A549 (cell line): ENCODE measurements at regions of chr1 and their contacts with region 1.

Region 1: DNA sequence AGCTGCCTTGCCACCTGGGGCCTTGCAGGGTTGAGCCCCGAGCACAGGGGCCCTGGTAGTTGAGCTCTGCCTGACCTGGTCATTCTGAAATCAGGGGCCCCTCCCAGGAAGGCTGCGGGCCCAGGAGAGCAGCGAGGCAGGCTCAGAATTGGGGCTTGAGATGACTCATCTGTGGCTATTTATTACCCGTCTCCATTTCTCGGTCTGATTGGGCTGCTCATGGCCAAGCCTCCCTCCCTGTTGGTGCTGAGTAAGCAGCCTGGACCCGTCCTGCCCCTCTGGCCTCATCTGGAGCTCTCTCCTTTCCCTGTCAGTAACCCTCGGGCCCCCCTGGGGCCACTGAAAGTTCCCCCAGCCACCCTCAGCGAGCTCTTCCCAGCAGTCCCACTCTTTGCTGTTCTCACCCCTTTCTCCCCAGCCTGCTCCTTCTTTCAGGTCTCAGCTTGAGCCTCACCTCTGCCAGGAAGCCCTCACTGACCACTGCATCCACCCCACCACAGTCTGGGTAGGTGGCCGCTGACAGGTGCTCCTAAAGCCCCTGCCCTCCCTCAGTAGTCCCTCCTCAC is 11.0 kb upstream of the TNFRSF8 start:
- DNase-seq: peak; percentile 38 to 50
- ATAC-seq: peak; percentile 84 to 89
- H3K4me3 ChIP-seq: no peak overlapping the region
- H3K27ac ChIP-seq: peak overlapping the region in 1 of 2 experiments; percentile 68; a peak in 2 of 6 replicates
- H3K4me1 ChIP-seq: peaks cover 8% of the 10 kb centered on the region; the same call in 1 of the 3 replicates
- CTCF ChIP-seq: no peak
- EP300 ChIP-seq: no peak
- POLR2A ChIP-seq: no peak
- RAD21 ChIP-seq: no peak

Region 2: DNA sequence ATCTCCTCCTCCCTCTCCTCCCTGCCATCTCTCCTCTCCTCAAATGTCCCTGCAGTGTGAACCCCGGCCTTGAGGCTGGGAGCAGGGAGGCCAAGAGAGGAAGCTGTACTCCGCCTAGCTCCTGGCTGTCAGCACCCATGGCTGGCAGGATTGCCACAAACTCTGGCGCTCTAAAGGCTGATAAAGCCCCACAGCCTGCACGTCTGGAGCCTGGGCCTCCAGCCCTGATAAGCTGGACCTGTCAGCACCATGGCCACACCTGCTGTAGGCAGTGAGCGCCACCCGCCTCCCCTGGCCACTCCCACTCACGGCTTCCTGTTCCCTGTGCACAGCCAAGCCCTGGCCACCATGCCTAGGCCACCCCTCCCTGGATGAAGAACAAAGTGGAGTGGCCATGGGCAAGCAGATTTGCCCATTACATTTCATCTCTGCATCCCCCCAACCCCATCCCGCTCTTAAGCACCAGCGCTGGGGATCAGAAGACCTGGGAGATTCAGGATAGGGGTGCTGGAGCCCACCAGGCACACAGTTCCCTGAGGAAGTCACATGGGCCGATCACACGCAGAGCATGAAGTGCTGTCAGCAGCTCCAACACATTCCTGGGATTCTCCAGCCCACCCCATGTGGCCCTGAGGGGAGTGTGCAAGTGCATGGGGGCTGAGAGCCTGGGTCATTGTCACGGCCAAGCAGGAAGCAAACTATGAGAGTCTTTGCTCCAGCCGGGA is 169.1 kb before region 1 on chr1:
- CTCF ChIA-PET with region 1: no interaction called
- POLR2A ChIA-PET with region 1: no interaction called
- DNase-seq: no peak
- ATAC-seq: peak in 1 of 2 experiments; percentile 32; a peak in 2 of 6 replicates
- H3K4me3 ChIP-seq: no peak overlapping the region
- H3K27ac ChIP-seq: no peak overlapping the region
- H3K4me1 ChIP-seq: no peaks in the 10 kb centered on the region
- CTCF ChIP-seq: no peak
- EP300 ChIP-seq: no peak
- POLR2A ChIP-seq: no peak
- RAD21 ChIP-seq: no peak

Region 3: GRCh38 chr1:12040457-12041051 is 11.5 kb before region 1 on chr1:
- CTCF ChIA-PET with region 1: interaction called, 12 read pairs
- POLR2A ChIA-PET with region 1: no interaction called
- DNase-seq: peak in 1 of 2 experiments; percentile 32
- ATAC-seq: peak in 1 of 2 experiments; percentile 24; a peak in 1 of 6 replicates
- H3K4me3 ChIP-seq: no peak overlapping the region
- H3K27ac ChIP-seq: no peak overlapping the region
- H3K4me1 ChIP-seq: peaks cover 5% of the 10 kb centered on the region; the same call in 1 of the 3 replicates
- CTCF ChIP-seq: no peak
- EP300 ChIP-seq: no peak
- POLR2A ChIP-seq: no peak
- RAD21 ChIP-seq: no peak